ENCODE measurements at regions of chr5 and their contacts with region 1.

Region 1: DNA sequence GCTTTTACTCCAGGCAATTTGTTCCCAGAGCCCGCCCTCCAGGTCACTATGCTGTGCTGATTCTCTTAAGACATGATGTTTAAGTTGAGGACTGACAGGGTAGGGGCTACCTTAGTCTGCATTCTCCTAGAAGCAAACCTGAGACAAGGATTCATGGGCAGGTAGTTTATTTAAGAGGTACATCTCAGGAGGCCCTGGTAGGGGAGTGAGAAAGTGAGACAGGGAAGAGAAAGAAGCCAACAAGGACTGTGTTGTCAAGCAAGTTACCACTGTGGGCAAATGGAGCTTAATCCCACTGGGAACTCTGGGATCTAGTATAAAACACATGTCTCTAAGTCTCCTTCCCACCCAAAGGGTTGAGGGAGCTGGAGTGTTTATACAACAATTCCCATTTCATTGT is 43.6 kb upstream of the FSTL4 start:
- DNase-seq: no peak

Region 2: DNA sequence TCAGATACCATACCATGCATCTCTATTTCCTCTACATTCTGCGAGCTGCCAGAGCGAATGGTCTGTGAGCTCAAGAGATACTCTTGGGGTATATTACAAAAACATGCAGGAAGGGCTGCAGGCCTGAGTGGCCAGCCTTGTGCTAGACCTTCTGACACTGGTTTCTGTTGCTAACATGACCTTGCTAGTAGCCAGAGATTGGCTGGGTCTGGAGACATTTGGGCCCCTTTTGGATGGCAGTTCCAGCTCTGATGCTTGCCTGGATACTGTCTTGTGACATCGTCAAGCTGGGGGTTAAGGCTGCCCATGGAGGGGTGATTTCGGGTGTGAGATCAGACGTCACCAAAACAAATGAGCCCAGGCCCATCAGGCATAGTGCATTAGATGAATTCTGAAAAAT is 12.5 kb after region 1 on chr5:
- intact Hi-C with region 1: loop called in 1 of 2 experiments (anchors 1 kb)
- DNase-seq: no peak

Region 3: DNA sequence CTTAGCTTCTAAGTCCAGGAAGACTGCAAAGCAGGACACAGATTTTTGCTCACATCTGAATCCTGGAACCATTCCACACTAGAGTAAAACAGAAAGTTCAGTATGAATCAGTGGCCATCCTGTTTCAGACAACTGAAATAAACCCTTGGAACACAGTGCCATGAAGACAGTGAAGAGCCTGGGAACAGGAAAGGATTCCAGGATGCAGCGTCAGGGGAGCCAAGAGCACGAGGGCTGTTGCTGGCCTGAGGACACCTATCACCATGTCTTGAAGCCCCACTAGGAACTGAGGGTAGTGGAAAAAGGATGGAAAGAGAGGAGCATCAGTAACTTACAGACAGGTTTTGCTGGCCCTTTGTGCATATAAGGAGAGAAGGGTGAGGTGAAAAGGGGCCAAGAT is 71.7 kb after region 1 on chr5:
- intact Hi-C with region 1: no loop called
- DNase-seq: no peak